ENCODE measurements at regions of chr20 and their contacts with region 1.

Region 1: DNA sequence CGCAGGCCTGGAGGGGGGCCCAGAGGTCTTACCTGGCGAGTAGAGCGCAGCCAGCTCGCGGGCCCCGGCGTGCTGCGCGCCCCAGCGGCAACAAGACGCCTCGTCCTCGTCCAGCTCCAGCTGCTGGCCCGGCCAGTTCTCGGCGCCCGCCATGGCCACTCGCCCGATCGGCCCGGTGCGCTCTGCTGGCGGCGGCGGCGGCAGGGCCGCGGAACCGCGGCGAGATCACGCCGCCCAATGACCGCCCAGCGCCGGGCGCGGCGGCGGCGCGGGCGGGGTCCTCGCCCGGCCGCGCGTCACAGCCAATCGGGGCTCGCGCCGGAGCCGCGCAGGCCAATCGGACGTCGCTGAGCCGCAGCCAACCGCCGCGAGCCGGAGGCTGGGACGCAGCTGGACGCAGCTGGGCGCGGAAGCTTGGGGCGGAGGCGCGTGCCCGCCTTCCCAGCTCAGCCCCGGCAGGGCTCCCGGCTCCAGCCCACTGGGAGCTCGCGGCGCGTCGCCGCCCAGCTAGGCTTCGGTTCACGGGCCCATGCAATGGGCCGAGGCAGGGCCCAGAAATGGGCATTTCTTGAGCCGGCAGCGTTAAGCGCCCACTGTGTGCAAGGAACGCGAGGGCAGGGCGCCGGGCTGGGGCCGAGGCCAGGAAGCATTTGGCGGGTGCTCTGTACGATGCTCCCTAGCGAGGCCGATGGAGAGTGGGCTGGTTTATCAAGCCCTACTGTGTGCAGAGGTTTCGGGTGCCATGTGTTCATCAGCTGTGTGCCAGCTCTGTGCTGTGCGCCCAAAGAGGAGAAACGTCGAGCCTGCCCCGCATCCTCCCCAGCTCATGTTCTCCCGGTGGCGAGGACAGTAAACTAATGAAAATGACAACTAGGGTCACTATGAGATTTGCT is at the start of gene PEDS1:
- DNase-seq: peak; percentile 79 to 94
- H3K4me3 ChIP-seq: peak within 1 kb of the TSS; percentile 80
- H3K27ac ChIP-seq: no peak within 1 kb of the TSS; the same call in 1 of the 2 replicates
- H3K4me1 ChIP-seq: peaks cover 34% of the 10 kb centered on the region
- H3K27me3 ChIP-seq: no peaks in the 10 kb centered on the region
- CTCF ChIP-seq: no peak
- total RNA-seq, gene PEDS1: 34.8 and 37.7 TPM in 2 replicates

Region 2: DNA sequence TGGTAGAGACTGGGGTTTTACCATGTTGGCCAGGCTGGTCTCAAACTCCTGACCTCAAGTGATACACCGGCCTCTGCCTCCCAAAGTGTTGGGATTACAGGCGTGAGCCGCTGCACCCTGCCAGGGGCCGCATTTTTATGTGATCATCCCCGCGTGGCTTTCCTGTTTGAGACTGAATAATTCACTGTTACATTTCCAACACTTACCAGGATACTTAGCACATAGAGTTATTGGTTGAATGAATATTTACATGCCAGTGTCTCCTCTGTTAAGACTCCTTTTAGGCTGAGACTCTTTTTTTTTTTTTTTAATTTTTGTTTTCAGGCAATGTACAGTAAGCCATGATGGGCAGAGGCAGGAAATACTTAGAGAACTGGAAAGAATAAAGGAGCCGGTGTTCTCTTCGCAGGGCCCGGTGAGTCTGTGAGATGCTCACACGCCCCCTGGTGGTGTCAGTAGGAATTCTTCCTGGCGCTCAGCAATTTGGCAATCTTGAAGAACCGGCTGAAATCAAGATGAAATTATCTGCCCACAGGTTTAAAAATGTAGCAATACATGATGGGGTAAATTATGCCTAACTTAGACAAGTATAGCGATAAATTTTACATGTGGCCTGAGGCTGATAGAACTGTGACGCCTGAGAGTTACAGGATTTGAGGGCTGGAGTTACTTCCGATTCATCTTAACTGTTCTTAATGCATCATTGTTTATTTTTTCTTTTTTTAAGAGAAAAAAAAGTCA is 225.2 kb before region 1 on chr20:
- CTCF ChIA-PET with region 1: no interaction called
- POLR2A ChIA-PET with region 1: interaction called, 37 read pairs
- intact Hi-C with region 1: no loop called
- DNase-seq: peak; percentile 86 to 89
- H3K4me3 ChIP-seq: no peak overlapping the region
- H3K27ac ChIP-seq: peak overlapping the region; percentile 53
- H3K4me1 ChIP-seq: peaks cover 13% of the 10 kb centered on the region; the same call in 1 of the 2 replicates
- H3K27me3 ChIP-seq: no peaks in the 10 kb centered on the region
- CTCF ChIP-seq: peak; percentile 98

Region 3: GRCh38 chr20:50048420-50049166 is 105.1 kb before region 1 on chr20:
- CTCF ChIA-PET with region 1: no interaction called
- POLR2A ChIA-PET with region 1: no interaction called
- intact Hi-C with region 1: no loop called
- DNase-seq: no peak
- H3K4me3 ChIP-seq: no peak overlapping the region
- H3K27ac ChIP-seq: no peak overlapping the region
- H3K4me1 ChIP-seq: no peaks in the 10 kb centered on the region; the same call in 1 of the 2 replicates
- H3K27me3 ChIP-seq: no peaks in the 10 kb centered on the region
- CTCF ChIP-seq: no peak

Region 4: DNA sequence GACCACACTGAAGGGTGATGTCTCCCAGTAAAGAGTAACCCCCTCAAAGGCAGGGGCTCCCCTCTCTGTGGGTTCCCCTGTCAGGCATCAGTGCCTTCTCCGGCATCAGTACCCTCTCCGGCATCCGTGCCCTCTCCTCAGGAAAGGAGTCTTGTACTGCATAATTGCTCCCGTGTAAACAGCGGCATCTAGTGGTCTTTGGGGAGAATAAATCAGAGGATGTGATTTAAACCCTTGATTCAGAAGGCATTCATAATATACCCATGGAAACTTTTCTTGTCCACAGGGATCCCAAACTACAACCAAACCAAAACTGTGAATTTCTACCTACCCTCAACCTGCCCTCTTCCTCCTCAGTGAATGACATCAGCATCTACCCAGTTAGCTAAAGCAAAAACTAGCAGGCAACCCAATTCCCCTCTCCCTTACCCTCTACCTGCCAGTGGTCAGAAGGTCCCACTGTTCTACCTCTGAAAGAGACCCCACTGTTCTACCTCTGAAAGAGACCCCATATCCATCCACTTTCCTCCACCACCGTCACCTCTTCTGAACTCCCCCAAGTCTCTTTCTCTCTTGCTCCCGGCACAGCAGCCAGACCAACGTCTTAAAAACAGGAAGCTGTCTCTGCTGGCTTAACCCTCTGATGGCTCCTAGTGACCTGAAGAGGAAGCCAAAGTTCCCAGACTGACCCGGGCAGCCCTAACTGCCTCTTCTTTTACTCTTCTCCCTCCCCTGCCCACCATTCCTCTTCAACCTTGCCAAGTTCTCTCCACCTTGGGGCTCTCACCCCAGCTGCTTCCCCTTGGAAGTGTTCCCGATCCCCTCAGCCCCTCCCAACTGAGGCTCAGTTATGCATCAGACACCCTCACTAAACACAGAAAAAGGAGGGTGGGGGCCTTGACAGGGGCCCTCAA is 68.0 kb before region 1 on chr20:
- CTCF ChIA-PET with region 1: interaction called, 7 read pairs
- POLR2A ChIA-PET with region 1: interaction called, 5 read pairs
- intact Hi-C with region 1: loop called (anchors 1 kb)
- DNase-seq: peak; percentile 43 to 66
- H3K4me3 ChIP-seq: peak overlapping the region; percentile 24; the same call in 1 of the 2 replicates
- H3K27ac ChIP-seq: peak overlapping the region; percentile 81
- H3K4me1 ChIP-seq: peaks cover 41% of the 10 kb centered on the region
- H3K27me3 ChIP-seq: no peaks in the 10 kb centered on the region
- CTCF ChIP-seq: peak; percentile 92

Region 5: DNA sequence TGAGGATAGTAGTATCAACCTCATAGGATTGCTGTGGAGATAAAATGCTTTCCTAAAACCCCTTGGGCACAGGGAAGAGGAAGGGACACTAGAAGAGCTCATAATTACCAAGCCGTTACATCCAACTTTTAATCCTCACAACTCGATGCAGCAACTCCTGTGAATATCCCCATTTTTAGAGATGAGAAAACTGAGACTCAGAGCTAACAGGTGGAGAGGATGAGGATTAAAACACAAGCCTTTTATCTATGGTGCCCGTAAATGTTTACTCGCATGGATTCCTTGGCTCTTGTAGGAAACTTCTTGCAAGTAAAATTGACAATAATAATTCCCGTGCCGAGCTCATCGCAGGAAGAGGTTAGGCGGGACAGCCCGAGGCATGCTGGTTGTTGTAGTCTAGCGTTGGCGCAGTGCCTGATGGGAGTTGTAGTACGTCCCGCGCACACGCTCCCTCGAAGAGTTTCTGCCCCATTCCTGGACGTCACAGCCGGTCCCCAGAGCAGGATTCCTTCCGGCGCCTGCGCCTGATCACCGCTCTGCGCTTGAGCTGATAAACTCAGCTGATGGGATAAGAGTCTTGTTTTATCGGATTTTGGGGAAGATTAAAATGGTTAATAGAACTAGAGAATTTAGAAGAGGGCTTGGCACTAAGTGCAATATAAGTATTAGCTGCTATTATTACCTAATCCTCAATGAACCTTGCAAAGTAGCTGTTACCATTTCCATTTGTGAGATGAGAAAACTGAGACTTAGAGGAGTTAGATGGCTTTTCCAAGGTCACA is 37.9 kb before region 1 on chr20:
- CTCF ChIA-PET with region 1: interaction called, 32 read pairs
- POLR2A ChIA-PET with region 1: interaction called, 12 read pairs
- intact Hi-C with region 1: loop called (anchors 5 kb)
- DNase-seq: peak; percentile 90 to 95
- H3K4me3 ChIP-seq: peak overlapping the region; percentile 73
- H3K27ac ChIP-seq: peak overlapping the region; percentile 20; the same call in 1 of the 2 replicates
- H3K4me1 ChIP-seq: peaks cover 27% of the 10 kb centered on the region
- H3K27me3 ChIP-seq: no peaks in the 10 kb centered on the region
- CTCF ChIP-seq: no peak

Region 6: DNA sequence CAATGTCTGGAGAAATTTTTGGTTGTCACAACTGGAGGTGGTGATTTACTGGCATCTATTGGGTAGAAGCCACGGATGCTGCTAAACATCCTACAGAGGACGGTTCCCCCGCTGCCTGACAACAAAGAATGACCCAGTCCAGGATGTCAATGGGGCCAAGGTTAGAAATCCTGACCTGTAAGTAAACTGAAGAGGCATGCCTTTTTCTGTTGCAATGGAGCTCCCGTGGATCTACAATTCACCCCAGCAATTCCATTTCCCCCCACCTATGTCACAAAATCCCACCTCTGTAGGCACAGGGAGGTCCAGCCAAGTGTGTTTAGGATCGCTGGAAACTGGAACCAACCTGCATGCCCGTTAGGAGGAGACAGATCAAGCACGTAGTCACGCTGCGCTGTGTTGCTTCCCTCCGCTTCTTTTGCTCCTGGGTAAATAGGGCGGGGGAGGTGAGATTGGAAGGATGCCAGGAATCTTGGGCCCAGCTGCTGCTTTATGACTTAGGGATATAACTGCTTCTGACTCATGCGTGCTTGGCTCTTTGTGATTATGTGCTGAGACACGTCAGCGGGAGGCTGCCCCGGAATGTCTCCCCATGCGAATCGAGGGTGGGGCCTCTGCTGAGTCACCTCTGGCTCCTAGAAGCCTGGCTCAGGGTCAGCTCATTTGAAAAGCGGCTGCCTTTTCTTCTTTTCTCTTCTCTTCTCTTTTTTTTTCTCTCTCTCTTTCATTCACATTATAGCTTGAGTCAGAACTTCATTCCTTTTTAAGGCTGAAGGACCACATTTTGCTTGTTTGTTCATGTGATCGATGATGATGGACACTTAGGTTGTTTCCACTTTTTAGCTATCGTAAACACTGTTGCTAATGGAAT is 12.2 kb after region 1 on chr20:
- CTCF ChIA-PET with region 1: interaction called, 11 read pairs
- POLR2A ChIA-PET with region 1: interaction called, 15 read pairs
- intact Hi-C with region 1: loop called (anchors 1 kb)
- DNase-seq: peak; percentile 98 to 100
- H3K4me3 ChIP-seq: peak overlapping the region; percentile 52
- H3K27ac ChIP-seq: peak overlapping the region; percentile 81
- H3K4me1 ChIP-seq: peaks cover 45% of the 10 kb centered on the region
- H3K27me3 ChIP-seq: no peaks in the 10 kb centered on the region
- CTCF ChIP-seq: 0 out of 2 replicates have a peak, but pooled peaks have one; percentile 14

Region 7: GRCh38 chr20:50179507-50180016 is 25.8 kb after region 1 on chr20:
- CTCF ChIA-PET with region 1: interaction called, 13 read pairs
- POLR2A ChIA-PET with region 1: no interaction called
- intact Hi-C with region 1: no loop called
- DNase-seq: no peak
- H3K4me3 ChIP-seq: no peak overlapping the region
- H3K27ac ChIP-seq: no peak overlapping the region
- H3K4me1 ChIP-seq: no peaks in the 10 kb centered on the region
- H3K27me3 ChIP-seq: no peaks in the 10 kb centered on the region
- CTCF ChIP-seq: peak; percentile 42

Measured in PC-9 (cell line).